Activated CD4-positive, alpha-beta T cell treated with anti-CD3 and anti-CD28 coated beads, Interleukin-2, amount 10 ng/mL, durations not matched to agents 24 days and 14 days (primary cell): ENCODE measurements at regions of chr3 and their contacts with region 1.

Region 1: GRCh38 chr3:17678116-17678741 is 64.2 kb downstream of the TBC1D5 start:
- DNase-seq: no peak
- H3K4me3 Mint-ChIP-seq: no peak overlapping the region
- H3K27ac Mint-ChIP-seq: no peak overlapping the region
- H3K4me1 Mint-ChIP-seq: peaks cover 6% of the 10 kb centered on the region
- H3K27me3 Mint-ChIP-seq: no peaks in the 10 kb centered on the region

Region 2: GRCh38 chr3:17579289-17580031 is 98.8 kb before region 1 on chr3:
- intact Hi-C with region 1: loop called (anchors 5 kb)
- DNase-seq: peak; percentile 57
- H3K4me3 Mint-ChIP-seq: no peak overlapping the region
- H3K27ac Mint-ChIP-seq: no peak overlapping the region
- H3K4me1 Mint-ChIP-seq: peaks cover 6% of the 10 kb centered on the region
- H3K27me3 Mint-ChIP-seq: no peaks in the 10 kb centered on the region

Region 3: GRCh38 chr3:17639765-17640164 is 38.5 kb before region 1 on chr3:
- intact Hi-C with region 1: loop called (anchors 1 kb)
- DNase-seq: no peak
- H3K4me3 Mint-ChIP-seq: no peak overlapping the region
- H3K27ac Mint-ChIP-seq: no peak overlapping the region
- H3K4me1 Mint-ChIP-seq: peaks cover 8% of the 10 kb centered on the region
- H3K27me3 Mint-ChIP-seq: no peaks in the 10 kb centered on the region

Region 4: GRCh38 chr3:18071833-18072232 is 393.6 kb after region 1 on chr3:
- intact Hi-C with region 1: no loop called
- DNase-seq: no peak
- H3K4me3 Mint-ChIP-seq: no peak overlapping the region
- H3K27ac Mint-ChIP-seq: no peak overlapping the region
- H3K4me1 Mint-ChIP-seq: no peaks in the 10 kb centered on the region
- H3K27me3 Mint-ChIP-seq: no peaks in the 10 kb centered on the region